ENCODE measurements at regions of chr7 and their contacts with region 1.

Region 1: DNA sequence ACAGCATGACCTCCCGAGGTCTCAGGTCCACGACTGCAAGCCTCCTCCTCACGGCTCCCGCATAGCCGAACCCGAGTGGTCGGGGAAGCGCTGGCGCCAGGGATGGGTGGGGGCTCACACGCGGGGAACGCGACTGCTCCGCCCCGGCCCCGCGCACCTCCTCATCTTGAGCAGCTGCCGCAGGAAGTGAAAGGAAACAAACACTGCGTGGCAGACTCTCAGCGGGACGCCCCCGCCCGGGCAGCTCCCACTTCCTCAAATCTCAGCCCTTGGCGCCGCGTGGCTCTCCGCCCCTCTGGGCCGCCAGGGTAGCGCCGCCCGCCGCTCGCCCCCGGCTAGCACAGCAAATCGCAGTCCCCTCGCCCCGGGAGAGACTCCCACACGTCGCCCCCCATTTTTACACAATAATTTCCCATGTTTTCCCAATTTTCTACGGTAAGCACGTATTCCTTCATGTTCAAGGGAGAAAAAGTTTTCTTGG is at the start of gene TMEM243:
- DNase-seq: no peak
- H3K4me3 ChIP-seq: peak within 1 kb of the TSS; percentile 93
- CTCF ChIP-seq: peak; percentile 32

Region 2: GRCh38 chr7:87231256-87231655 is 11.7 kb after region 1 on chr7:
- CTCF ChIA-PET with region 1: interaction called, 26 read pairs
- POLR2A ChIA-PET with region 1: interaction called, 4 read pairs
- DNase-seq: no peak
- H3K4me3 ChIP-seq: no peak overlapping the region
- CTCF ChIP-seq: no peak